Prostate gland (tissue), 2 donors: ENCODE measurements at regions of chr22 and their contacts with region 1.

Region 1: GRCh38 chr22:28741758-28742561 is at the starts of genes CHEK2 and HSCB:
- DNase-seq: peak; percentile 99
- H3K4me3 ChIP-seq: peak within 1 kb of the TSS; percentile 78 to 94
- H3K27ac ChIP-seq: peak within 1 kb of the TSS; percentile 96 to 99
- H3K4me1 ChIP-seq: no peaks in the 10 kb centered on the region
- H3K27me3 ChIP-seq: no peaks in the 10 kb centered on the region
- CTCF ChIP-seq: peak in 2 of 4 experiments; percentile 31 to 39
- POLR2A ChIP-seq: peak; percentile 46
- total RNA-seq, gene CHEK2: 15.6 to 18.6 TPM
- total RNA-seq, gene HSCB: 27.9 to 39.5 TPM

Region 2: DNA sequence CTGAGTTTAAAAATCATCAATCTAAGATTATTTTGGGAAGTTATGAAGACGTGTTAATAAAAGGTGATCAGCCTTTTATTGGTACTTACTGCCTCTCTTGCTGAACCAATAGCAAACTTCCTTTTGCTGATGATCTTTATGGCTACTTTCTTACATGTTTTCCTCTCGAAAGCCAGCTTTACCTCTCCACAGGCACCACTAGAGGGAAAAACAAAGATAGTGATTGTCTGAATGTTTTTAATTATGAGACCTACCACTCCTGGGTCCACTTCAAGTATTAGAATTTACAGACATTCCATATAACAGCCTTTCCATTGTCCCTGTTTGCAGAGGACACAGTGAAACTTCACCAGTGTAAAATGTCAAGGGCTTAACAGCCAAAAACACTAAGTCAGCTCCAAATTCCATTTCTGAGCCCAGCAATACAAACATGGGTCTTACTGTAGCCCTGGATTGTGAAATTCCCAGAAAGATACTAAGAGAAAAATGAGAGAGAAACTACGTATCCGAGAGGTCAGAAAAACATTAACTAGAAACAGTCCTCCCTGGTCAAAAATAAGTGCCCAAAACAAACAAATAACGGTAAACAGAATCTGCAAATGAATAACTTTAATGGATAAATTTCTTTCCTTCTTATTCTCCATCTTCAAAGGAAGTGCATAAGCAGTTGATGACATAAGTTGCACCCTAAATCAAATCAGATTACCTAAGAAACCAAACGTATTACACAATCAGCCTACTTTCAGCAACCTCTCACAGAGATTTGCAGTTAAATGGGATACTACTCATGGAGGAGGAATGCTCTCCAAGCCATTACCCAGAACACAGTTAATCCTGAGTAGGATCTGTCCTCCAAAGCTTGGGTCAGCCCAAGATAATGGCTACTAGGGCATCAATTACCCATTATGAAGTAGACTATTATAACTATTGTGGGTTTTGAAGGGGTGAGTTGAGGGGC is 29.9 kb before region 1 on chr22:
- intact Hi-C with region 1: loop called (anchors 1 kb)
- DNase-seq: no peak
- H3K4me3 ChIP-seq: no peak overlapping the region
- H3K27ac ChIP-seq: peak overlapping the region; percentile 20 to 35
- H3K4me1 ChIP-seq: no peaks in the 10 kb centered on the region
- H3K27me3 ChIP-seq: no peaks in the 10 kb centered on the region
- CTCF ChIP-seq: no peak
- POLR2A ChIP-seq: no peak

Region 3: DNA sequence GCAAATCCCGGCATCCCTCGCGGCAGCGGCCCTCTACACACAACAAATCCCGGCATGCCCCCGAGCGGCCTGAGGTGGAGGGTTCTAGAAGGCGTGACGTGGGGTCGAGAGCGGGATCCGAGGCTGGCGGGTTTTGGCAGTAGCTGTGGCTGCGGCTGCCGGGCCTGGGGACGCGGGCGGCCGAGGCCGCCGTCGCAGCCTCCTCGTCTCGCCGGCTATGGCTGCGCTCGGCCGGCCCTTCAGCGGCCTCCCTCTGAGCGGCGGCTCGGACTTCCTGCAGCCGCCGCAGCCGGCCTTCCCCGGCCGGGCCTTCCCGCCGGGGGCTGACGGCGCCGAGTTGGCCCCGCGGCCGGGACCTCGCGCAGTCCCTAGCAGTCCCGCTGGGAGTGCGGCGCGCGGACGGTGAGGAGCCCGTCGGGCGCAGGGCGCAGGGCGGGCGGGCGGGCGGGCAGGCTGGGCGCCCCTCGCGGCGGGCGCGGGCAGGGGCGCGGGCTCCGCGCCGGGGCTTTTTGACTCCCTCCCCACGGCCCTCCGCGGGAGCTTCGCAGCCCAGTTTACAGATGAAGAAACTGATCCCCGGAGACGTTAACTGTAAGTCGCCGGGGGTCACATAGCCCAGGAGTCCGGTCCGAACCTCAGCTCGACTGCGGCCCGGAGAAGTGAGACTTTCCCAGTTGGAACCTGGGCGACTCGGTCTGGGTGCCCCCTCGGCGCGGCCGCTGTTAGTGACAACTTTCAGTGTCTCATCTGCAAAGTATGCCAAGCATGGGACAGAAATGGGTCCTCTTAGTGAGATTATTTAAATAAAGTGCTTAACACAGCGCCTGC is 30.9 kb after region 1 on chr22 and contains the start of gene CCDC117:
- intact Hi-C with region 1: loop called (anchors 2 kb)
- DNase-seq: peak; percentile 96
- H3K4me3 ChIP-seq: peak within 1 kb of the TSS; percentile 90 to 95
- H3K27ac ChIP-seq: peak within 1 kb of the TSS; percentile 99 to 100
- H3K4me1 ChIP-seq: peaks cover 5% of the 10 kb centered on the region
- H3K27me3 ChIP-seq: no peaks in the 10 kb centered on the region
- CTCF ChIP-seq: peak in 2 of 4 experiments; percentile 32 to 38
- POLR2A ChIP-seq: peak; percentile 97
- total RNA-seq, gene CCDC117: 29.5 to 54.4 TPM

Region 4: DNA sequence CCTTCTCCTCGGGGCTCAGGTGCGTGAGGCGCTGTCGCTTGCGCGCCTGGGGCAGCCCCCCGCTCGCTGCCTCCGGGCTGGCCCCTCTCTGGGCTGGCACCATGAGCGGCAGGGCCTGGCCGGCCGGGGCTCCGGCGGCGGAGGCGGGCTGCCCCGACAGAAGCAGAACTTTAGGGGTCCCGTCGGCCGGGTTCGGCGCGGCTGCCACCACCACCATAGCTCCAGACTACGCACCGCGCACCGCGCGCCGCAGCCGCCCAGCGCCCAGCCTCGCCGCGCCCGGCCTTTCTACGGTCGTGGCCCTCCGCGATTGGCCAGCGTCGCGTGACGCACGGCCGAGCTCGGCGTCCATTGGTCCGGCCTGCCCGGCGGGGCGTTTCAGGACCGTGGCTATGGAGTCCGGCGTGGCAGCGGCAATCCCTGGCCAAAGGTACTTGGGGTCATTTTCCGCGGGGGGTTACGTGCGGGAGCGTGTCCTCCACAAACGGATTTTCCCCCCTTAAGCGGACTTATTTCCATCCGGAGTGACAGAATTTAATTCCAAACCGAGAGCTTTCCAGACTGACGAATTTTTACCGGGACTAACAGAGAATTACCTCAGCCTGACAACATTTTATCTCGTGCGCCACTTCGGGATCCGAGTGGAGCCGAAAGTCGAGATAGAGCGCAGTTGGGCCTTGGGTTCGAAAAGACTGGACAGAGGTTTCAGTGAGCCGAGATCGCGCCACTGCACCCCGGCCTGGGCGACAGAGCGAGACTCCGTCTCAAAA is 58.5 kb after region 1 on chr22 and contains the start of gene XBP1:
- intact Hi-C with region 1: loop called (anchors 1 kb)
- DNase-seq: peak; percentile 94
- H3K4me3 ChIP-seq: peak within 1 kb of the TSS; percentile 98 to 100
- H3K27ac ChIP-seq: peak within 1 kb of the TSS; percentile 100
- H3K4me1 ChIP-seq: no peaks in the 10 kb centered on the region
- H3K27me3 ChIP-seq: no peaks in the 10 kb centered on the region
- CTCF ChIP-seq: peak in 2 of 4 experiments; percentile 5 to 29
- POLR2A ChIP-seq: peak; percentile 100
- total RNA-seq, gene XBP1: 200 to 798 TPM